Natural killer cell (primary cell): ENCODE measurements at regions of chr14 and their contacts with region 1.

Region 1: GRCh38 chr14:62126879-62127478 is 364.8 kb downstream of the SNAPC1 start:
- DNase-seq: peak in 1 of 2 donors; percentile 68
- ATAC-seq: peak; percentile 61 to 87 (median 76)
- H3K4me3 ChIP-seq: no peak overlapping the region
- H3K4me3 Mint-ChIP-seq: no peak overlapping the region
- H3K27ac ChIP-seq: no peak overlapping the region
- H3K27ac Mint-ChIP-seq: no peak overlapping the region
- H3K4me1 ChIP-seq: no peaks in the 10 kb centered on the region
- H3K4me1 Mint-ChIP-seq: peaks cover 0 to 6% of the 10 kb centered on the region in 2 donors
- H3K27me3 ChIP-seq: peaks cover 22% of the 10 kb centered on the region
- H3K27me3 Mint-ChIP-seq: peaks cover 19 to 61% of the 10 kb centered on the region in 2 donors
- CTCF ChIP-seq: peak; percentile 95

Region 2: DNA sequence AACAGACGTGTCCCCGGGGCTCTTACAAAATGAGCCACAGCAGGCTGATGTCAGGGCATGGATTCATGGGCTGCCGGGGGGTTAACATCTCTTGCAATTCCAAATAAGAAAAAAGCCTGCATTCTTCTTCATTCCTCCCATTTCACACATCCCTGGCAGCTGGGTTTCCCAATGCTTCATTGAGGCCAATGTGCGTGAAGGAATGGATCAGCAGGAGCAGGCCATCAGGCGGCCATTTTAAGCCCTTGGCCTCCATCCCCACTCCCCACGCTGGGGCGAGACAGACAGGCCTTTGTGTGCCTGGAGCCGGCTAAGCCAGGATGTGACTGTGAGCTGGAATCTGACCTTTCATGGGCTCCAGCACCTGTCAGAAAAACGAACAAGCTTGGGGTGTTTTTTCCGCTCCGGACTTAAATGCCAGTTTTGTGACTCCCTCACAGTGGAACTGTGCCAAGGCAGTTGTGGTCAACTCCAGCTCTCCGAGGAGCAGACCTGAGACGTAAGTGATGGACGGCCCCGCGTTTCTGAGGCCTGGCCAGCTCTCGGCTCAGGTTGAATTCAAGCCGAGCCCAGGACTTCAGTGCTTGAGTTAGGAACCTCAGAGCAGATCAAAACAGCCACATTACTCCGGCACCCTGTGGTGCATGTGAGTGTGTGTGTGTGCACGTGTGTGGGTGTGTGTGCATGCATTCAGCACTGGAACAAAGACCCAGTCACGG is 979.0 kb before region 1 on chr14:
- intact Hi-C with region 1: no loop called
- DNase-seq: no peak
- ATAC-seq: peak in 1 of 3 donors; percentile 24
- H3K4me3 ChIP-seq: no peak overlapping the region
- H3K4me3 Mint-ChIP-seq: no peak overlapping the region
- H3K27ac ChIP-seq: no peak overlapping the region
- H3K27ac Mint-ChIP-seq: no peak overlapping the region
- H3K4me1 ChIP-seq: no peaks in the 10 kb centered on the region
- H3K4me1 Mint-ChIP-seq: no peaks in the 10 kb centered on the region
- H3K27me3 ChIP-seq: no peaks in the 10 kb centered on the region
- H3K27me3 Mint-ChIP-seq: peaks cover 10 to 16% of the 10 kb centered on the region in 2 donors
- CTCF ChIP-seq: no peak

Region 3: GRCh38 chr14:61269321-61270083 is 857.5 kb before region 1 on chr14:
- intact Hi-C with region 1: loop called (anchors 5 kb)
- DNase-seq: peak; percentile 62 to 90
- ATAC-seq: peak; percentile 89 to 98 (median 98)
- H3K4me3 ChIP-seq: no peak overlapping the region
- H3K4me3 Mint-ChIP-seq: peak overlapping the region; percentile 32
- H3K27ac ChIP-seq: no peak overlapping the region
- H3K27ac Mint-ChIP-seq: no peak overlapping the region
- H3K4me1 ChIP-seq: peaks cover 4% of the 10 kb centered on the region
- H3K4me1 Mint-ChIP-seq: peaks cover 7 to 9% of the 10 kb centered on the region in 2 donors
- H3K27me3 ChIP-seq: peaks cover 6% of the 10 kb centered on the region
- H3K27me3 Mint-ChIP-seq: peaks cover 42 to 62% of the 10 kb centered on the region in 2 donors
- CTCF ChIP-seq: peak; percentile 74

Region 4: GRCh38 chr14:61860294-61860918 is 266.6 kb before region 1 on chr14:
- intact Hi-C with region 1: loop called (anchors 1 kb)
- DNase-seq: peak; percentile 41 to 68
- ATAC-seq: peak; percentile 79 to 97 (median 95)
- H3K4me3 ChIP-seq: no peak overlapping the region
- H3K4me3 Mint-ChIP-seq: no peak overlapping the region
- H3K27ac ChIP-seq: no peak overlapping the region
- H3K27ac Mint-ChIP-seq: no peak overlapping the region
- H3K4me1 ChIP-seq: no peaks in the 10 kb centered on the region
- H3K4me1 Mint-ChIP-seq: no peaks in the 10 kb centered on the region
- H3K27me3 ChIP-seq: no peaks in the 10 kb centered on the region
- H3K27me3 Mint-ChIP-seq: peaks cover 22 to 50% of the 10 kb centered on the region in 2 donors
- CTCF ChIP-seq: peak; percentile 88

Region 5: DNA sequence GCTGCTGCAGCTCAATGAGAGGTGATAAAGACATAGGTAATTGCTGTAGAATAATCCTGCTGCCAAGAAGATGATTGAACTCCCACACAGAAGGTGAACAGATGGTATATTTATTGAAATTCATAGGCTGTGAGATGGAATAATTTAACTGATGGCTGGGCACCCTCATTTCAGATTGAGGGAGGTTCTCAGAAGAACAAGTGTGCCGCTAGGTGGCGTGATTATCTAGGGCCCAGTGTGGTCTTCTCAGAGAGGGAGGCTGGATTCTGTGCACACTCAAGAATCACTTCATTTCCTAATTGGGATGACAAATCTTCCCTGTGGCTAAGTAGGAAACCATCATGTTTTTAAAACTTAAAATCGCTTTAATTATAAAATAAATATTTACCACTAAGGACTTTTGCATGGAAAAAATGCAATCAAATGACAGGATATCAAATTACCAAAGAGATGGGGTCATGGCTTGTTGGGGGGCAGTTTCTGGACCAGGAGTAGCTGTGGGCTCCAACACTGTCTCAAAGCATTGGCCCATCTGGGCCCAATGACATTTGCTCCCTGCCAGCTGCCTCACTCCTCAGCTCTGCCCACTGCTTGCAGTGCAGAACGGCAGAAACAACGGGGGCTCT is 232.4 kb before region 1 on chr14:
- intact Hi-C with region 1: loop called (anchors 1 kb)
- DNase-seq: peak; percentile 32 to 75
- ATAC-seq: peak in 2 of 3 donors; percentile 29 to 52
- H3K4me3 ChIP-seq: no peak overlapping the region
- H3K4me3 Mint-ChIP-seq: no peak overlapping the region
- H3K27ac ChIP-seq: no peak overlapping the region
- H3K27ac Mint-ChIP-seq: no peak overlapping the region
- H3K4me1 ChIP-seq: peaks cover 7% of the 10 kb centered on the region
- H3K4me1 Mint-ChIP-seq: peaks cover 7 to 17% of the 10 kb centered on the region in 2 donors
- H3K27me3 ChIP-seq: no peaks in the 10 kb centered on the region
- H3K27me3 Mint-ChIP-seq: peaks cover 2 to 23% of the 10 kb centered on the region in 2 donors
- CTCF ChIP-seq: peak; percentile 64

Region 6: GRCh38 chr14:61925043-61925442 is 201.9 kb before region 1 on chr14:
- intact Hi-C with region 1: loop called (anchors 1 kb)
- DNase-seq: peak in 1 of 2 donors; percentile 51
- ATAC-seq: peak; percentile 43 to 77 (median 62)
- H3K4me3 ChIP-seq: no peak overlapping the region
- H3K4me3 Mint-ChIP-seq: no peak overlapping the region
- H3K27ac ChIP-seq: no peak overlapping the region
- H3K27ac Mint-ChIP-seq: no peak overlapping the region
- H3K4me1 ChIP-seq: no peaks in the 10 kb centered on the region
- H3K4me1 Mint-ChIP-seq: no peaks in the 10 kb centered on the region
- H3K27me3 ChIP-seq: no peaks in the 10 kb centered on the region
- H3K27me3 Mint-ChIP-seq: peaks cover 22 to 58% of the 10 kb centered on the region in 2 donors
- CTCF ChIP-seq: peak; percentile 54